ENCODE measurements at regions of chr19 and their contacts with region 1.

Region 1: DNA sequence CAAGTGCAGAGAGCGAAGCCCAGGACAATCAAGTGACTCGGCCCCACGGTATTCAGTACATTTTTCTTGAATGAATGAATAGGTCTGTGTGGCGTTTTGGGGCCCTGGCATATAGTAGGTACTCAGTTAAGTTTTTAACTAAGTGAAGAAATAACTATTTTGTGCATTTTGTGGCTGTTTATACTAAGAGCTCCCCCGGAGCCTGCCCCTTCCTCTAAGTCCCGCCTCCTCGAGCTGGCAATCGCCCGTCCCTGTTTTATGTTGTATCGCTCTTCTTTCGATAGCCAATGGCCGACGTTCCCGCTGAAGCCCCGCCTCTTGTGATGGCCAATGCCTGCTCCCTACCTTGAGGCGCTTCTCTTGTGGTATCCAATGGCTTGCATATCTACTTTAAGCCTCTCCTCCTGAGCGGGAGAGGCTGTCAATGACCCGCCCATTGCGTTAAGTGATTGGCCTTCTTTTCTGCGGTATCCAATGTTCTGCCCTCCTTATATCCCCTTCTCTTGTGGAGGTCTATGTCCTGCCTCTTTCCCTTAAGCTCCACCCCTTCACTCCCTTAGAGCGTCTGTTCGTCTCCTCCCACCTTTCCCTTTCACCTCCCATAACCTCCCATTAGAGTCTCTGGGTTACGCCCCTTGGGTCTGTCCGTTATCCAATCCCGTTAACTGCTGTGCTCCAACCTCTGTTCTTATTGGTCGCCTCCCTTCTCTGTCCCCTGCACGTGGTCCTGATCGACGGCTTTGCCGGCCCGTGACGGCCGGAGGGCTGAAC is 509 bp upstream of the HDGFL2 start:
- DNase-seq: peak; percentile 99
- H3K4me3 Mint-ChIP-seq: no peak overlapping the region
- H3K27ac Mint-ChIP-seq: no peak overlapping the region
- H3K4me1 Mint-ChIP-seq: peaks cover 21% of the 10 kb centered on the region
- H3K27me3 Mint-ChIP-seq: no peaks in the 10 kb centered on the region

Region 2: GRCh38 chr19:4246767-4247593 is 224.6 kb before region 1 on chr19 and contains the start of gene YJU2:
- CTCF ChIA-PET with region 1: no interaction called
- POLR2A ChIA-PET with region 1: no interaction called
- intact Hi-C with region 1: loop called (anchors 1 kb)
- DNase-seq: peak; percentile 99
- H3K4me3 Mint-ChIP-seq: peak within 1 kb of the TSS; percentile 83
- H3K27ac Mint-ChIP-seq: peak within 1 kb of the TSS; percentile 96
- H3K4me1 Mint-ChIP-seq: peaks cover 19% of the 10 kb centered on the region
- H3K27me3 Mint-ChIP-seq: no peaks in the 10 kb centered on the region
- total RNA-seq, gene YJU2: 24.0 to 25.5 TPM

Region 3: GRCh38 chr19:4328243-4328990 is 143.2 kb before region 1 on chr19:
- CTCF ChIA-PET with region 1: no interaction called
- POLR2A ChIA-PET with region 1: no interaction called
- intact Hi-C with region 1: loop called (anchors 1 kb)
- DNase-seq: peak; percentile 98
- H3K4me3 Mint-ChIP-seq: peak overlapping the region; percentile 85
- H3K27ac Mint-ChIP-seq: peak overlapping the region; percentile 81
- H3K4me1 Mint-ChIP-seq: peaks cover 26% of the 10 kb centered on the region
- H3K27me3 Mint-ChIP-seq: peaks cover 3% of the 10 kb centered on the region

Region 4: GRCh38 chr19:4342615-4343369 is 128.8 kb before region 1 on chr19:
- CTCF ChIA-PET with region 1: no interaction called
- POLR2A ChIA-PET with region 1: interaction called, 6 read pairs
- intact Hi-C with region 1: loop called (anchors 2 kb)
- DNase-seq: peak; percentile 96
- H3K4me3 Mint-ChIP-seq: peak overlapping the region; percentile 89
- H3K27ac Mint-ChIP-seq: peak overlapping the region; percentile 88
- H3K4me1 Mint-ChIP-seq: peaks cover 24% of the 10 kb centered on the region
- H3K27me3 Mint-ChIP-seq: no peaks in the 10 kb centered on the region

Region 5: GRCh38 chr19:4457654-4458395 is 13.8 kb before region 1 on chr19 and contains the start of gene UBXN6:
- CTCF ChIA-PET with region 1: no interaction called
- POLR2A ChIA-PET with region 1: interaction called, 14 read pairs
- intact Hi-C with region 1: loop called (anchors 1 kb)
- DNase-seq: peak; percentile 99
- H3K4me3 Mint-ChIP-seq: peak within 1 kb of the TSS; percentile 82
- H3K27ac Mint-ChIP-seq: peak within 1 kb of the TSS; percentile 82
- H3K4me1 Mint-ChIP-seq: peaks cover 19% of the 10 kb centered on the region
- H3K27me3 Mint-ChIP-seq: no peaks in the 10 kb centered on the region
- total RNA-seq, gene UBXN6: 36.2 to 37.1 TPM

Region 6: GRCh38 chr19:4482721-4483364 is 11.3 kb after region 1 on chr19:
- CTCF ChIA-PET with region 1: no interaction called
- POLR2A ChIA-PET with region 1: no interaction called
- intact Hi-C with region 1: no loop called
- DNase-seq: no peak
- H3K4me3 Mint-ChIP-seq: no peak overlapping the region
- H3K27ac Mint-ChIP-seq: no peak overlapping the region
- H3K4me1 Mint-ChIP-seq: no peaks in the 10 kb centered on the region
- H3K27me3 Mint-ChIP-seq: no peaks in the 10 kb centered on the region

Region 7: DNA sequence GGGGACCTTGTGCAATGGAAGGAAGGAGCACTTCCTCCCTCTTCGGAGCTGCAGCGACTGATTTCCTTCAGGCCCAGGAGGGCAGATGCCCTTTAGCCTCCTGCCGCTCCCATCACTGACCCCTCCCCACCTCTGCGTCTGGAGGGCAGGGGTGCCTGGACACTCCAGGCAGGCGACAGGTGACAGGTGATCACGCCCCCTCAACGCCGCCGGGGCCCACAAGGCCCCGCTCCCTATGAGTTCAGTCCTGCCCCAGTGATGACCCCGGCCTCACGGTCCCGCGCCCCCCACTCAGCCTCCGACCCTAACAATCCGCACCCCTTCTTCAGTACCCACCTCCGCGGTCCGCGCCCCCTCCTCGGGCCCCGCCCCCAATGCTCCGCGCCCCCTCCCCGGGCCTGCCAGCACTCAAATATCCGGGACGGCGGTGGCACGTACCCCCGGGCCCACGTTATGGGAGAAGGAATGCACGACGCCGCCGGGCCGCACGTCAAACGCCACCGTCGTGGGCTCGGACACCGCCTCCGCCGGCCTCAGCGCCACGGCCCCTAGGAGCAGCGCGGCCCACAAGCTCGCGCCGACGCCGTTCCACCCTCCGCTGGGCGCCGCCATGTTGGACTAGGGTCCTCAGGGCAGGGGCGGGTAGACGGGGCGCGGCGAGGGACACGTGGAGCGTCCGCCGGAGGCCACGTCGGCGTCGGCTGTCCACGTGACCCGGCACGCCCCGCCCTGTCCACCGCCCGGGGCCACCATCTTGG is 198.3 kb after region 1 on chr19 and contains the start of gene MYDGF:
- CTCF ChIA-PET with region 1: no interaction called
- POLR2A ChIA-PET with region 1: no interaction called
- intact Hi-C with region 1: loop called (anchors 5 kb)
- DNase-seq: peak; percentile 95
- H3K4me3 Mint-ChIP-seq: peak within 1 kb of the TSS; percentile 87
- H3K27ac Mint-ChIP-seq: peak within 1 kb of the TSS; percentile 75
- H3K4me1 Mint-ChIP-seq: peaks cover 18% of the 10 kb centered on the region
- H3K27me3 Mint-ChIP-seq: no peaks in the 10 kb centered on the region
- total RNA-seq, gene MYDGF: 72.9 to 74.7 TPM